ENCODE measurements at regions of chr3 and their contacts with region 1.

Region 1: GRCh38 chr3:184777336-184778004 is 34.5 kb upstream of the VPS8 start:
- DNase-seq: peak; percentile 95
- H3K4me3 ChIP-seq: no peak overlapping the region
- H3K27ac ChIP-seq: no peak overlapping the region
- H3K4me1 ChIP-seq: peaks cover 11% of the 10 kb centered on the region
- H3K27me3 ChIP-seq: no peaks in the 10 kb centered on the region
- CTCF ChIP-seq: peak; percentile 81

Region 2: GRCh38 chr3:184711493-184712247 is 65.8 kb before region 1 on chr3 and contains the start of gene MAGEF1:
- CTCF ChIA-PET with region 1: no interaction called
- POLR2A ChIA-PET with region 1: no interaction called
- intact Hi-C with region 1: loop called (anchors 5 kb)
- DNase-seq: peak; percentile 92
- H3K4me3 ChIP-seq: peak within 1 kb of the TSS; percentile 75
- H3K27ac ChIP-seq: peak within 1 kb of the TSS; percentile 89
- H3K4me1 ChIP-seq: peaks cover 25% of the 10 kb centered on the region
- H3K27me3 ChIP-seq: no peaks in the 10 kb centered on the region
- CTCF ChIP-seq: no peak
- total RNA-seq, gene MAGEF1: 47.6 and 51.2 TPM in 2 replicates

Region 3: GRCh38 chr3:184766555-184767261 is 10.8 kb before region 1 on chr3:
- CTCF ChIA-PET with region 1: interaction called, 10 read pairs
- POLR2A ChIA-PET with region 1: interaction called, 3 read pairs
- intact Hi-C with region 1: no loop called
- DNase-seq: peak; percentile 25
- H3K4me3 ChIP-seq: no peak overlapping the region
- H3K27ac ChIP-seq: no peak overlapping the region
- H3K4me1 ChIP-seq: no peaks in the 10 kb centered on the region
- H3K27me3 ChIP-seq: no peaks in the 10 kb centered on the region
- CTCF ChIP-seq: no peak